Activated B cell treated with CpG ODN at 0.5 μM for 24 hours (primary cell): ENCODE measurements at regions of chrX and their contacts with region 1.

Region 1: DNA sequence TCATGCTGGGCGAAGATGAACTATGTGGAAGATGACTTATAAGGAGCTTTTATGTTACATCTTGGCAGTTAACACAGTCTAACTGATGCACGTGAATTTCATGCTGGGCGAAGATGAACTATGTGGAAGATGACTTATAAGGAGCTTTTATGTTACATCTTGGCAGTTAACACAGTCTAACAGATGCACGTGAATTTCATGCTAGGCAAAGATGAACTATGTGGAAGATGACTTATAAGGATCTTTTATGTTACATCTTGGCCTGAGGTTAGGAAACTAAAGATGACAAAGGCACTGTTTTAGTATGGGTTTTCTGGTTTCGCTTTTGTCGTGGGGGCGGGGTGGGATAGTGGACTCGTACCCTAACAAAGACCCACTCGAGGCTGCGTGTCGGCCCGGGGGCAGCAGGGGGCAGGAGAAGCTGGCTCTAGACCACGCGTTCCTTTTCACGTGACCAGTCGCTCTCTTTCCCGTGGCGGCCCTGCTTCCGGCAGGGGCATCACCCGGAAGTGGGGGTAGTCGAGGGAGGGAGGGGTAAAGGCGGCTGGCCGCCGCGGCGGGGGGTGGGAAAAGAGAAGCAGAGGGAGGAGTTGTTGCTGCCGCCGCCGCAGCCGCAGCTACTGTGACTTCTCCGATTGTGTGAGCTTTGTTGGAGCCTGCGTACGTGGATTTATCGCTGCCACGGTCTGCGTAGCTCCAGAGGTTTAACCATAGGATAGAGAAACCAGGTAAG is at the start of gene ATP7A:
- DNase-seq: peak; percentile 72
- ATAC-seq: peak; percentile 92
- H3K4me3 Mint-ChIP-seq: peak within 1 kb of the TSS; percentile 96
- H3K27ac Mint-ChIP-seq: peak within 1 kb of the TSS; percentile 93
- H3K4me1 Mint-ChIP-seq: peaks cover 21% of the 10 kb centered on the region
- H3K27me3 Mint-ChIP-seq: no peaks in the 10 kb centered on the region
- CTCF ChIP-seq: no peak
- total RNA-seq, gene ATP7A: 8.2 and 9.4 TPM in 2 replicates

Region 2: GRCh38 chrX:76279000-76279399 is 1631.3 kb before region 1 on chrX:
- CTCF ChIA-PET with region 1: no interaction called
- POLR2A ChIA-PET with region 1: no interaction called
- intact Hi-C with region 1: loop called (anchors 5 kb)
- DNase-seq: no peak
- ATAC-seq: no peak
- H3K4me3 Mint-ChIP-seq: no peak overlapping the region
- H3K27ac Mint-ChIP-seq: no peak overlapping the region
- H3K4me1 Mint-ChIP-seq: no peaks in the 10 kb centered on the region
- H3K27me3 Mint-ChIP-seq: no peaks in the 10 kb centered on the region
- CTCF ChIP-seq: no peak

Region 3: DNA sequence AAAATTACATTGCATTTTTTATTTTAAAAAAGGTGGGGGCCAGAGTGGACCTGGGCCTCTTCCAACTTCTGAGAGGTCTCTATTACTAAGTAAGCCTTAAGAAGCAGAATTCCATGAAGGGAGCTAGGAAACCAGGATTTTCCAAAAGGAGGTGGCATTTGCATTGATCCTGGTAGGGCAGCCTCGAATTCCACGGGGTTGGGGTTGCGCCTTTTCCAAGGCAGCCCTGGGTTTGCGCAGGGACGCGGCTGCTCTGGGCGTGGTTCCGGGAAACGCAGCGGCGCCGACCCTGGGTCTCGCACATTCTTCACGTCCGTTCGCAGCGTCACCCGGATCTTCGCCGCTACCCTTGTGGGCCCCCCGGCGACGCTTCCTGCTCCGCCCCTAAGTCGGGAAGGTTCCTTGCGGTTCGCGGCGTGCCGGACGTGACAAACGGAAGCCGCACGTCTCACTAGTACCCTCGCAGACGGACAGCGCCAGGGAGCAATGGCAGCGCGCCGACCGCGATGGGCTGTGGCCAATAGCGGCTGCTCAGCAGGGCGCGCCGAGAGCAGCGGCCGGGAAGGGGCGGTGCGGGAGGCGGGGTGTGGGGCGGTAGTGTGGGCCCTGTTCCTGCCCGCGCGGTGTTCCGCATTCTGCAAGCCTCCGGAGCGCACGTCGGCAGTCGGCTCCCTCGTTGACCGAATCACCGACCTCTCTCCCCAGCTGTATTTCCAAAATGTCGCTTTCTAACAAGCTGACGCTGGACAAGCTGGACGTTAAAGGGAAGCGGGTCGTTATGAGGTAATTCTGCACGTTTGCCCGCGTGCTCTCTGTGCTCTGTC is 193.6 kb after region 1 on chrX and contains the start of gene PGK1:
- CTCF ChIA-PET with region 1: no interaction called
- POLR2A ChIA-PET with region 1: interaction called, 4 read pairs
- intact Hi-C with region 1: loop called (anchors 1 kb)
- DNase-seq: peak; percentile 81
- ATAC-seq: peak; percentile 95
- H3K4me3 Mint-ChIP-seq: peak within 1 kb of the TSS; percentile 87
- H3K27ac Mint-ChIP-seq: peak within 1 kb of the TSS; percentile 90
- H3K4me1 Mint-ChIP-seq: peaks cover 41% of the 10 kb centered on the region
- H3K27me3 Mint-ChIP-seq: peaks cover 2% of the 10 kb centered on the region
- CTCF ChIP-seq: no peak
- total RNA-seq, gene PGK1: 293 and 295 TPM in 2 replicates

Region 4: DNA sequence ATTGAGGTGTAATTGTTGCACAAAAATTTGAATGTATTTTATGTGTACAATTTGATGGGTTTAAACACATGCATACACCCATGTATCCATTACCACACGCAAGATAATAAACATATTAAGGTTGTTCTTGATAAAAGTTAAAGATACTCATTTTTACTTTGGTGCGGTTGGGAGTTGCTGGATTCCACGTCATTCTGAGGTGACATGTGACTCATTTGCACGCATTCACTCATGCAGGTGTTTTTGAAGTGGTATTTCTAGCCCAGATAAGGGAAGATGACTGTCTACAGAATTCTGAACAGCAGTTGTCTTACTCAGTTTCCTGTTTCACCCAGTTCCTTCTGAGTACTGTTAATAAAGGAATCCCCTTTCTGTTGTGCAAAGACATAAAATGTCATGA is 606.9 kb after region 1 on chrX:
- CTCF ChIA-PET with region 1: no interaction called
- POLR2A ChIA-PET with region 1: no interaction called
- intact Hi-C with region 1: loop called (anchors 10 kb)
- DNase-seq: no peak
- ATAC-seq: peak; percentile 82
- H3K4me3 Mint-ChIP-seq: no peak overlapping the region
- H3K27ac Mint-ChIP-seq: peak overlapping the region; percentile 70
- H3K4me1 Mint-ChIP-seq: peaks cover 28% of the 10 kb centered on the region
- H3K27me3 Mint-ChIP-seq: no peaks in the 10 kb centered on the region
- CTCF ChIP-seq: no peak

Region 5: GRCh38 chrX:78754917-78755316 is 844.6 kb after region 1 on chrX:
- CTCF ChIA-PET with region 1: no interaction called
- POLR2A ChIA-PET with region 1: no interaction called
- intact Hi-C with region 1: loop called (anchors 10 kb)
- DNase-seq: no peak
- ATAC-seq: peak; percentile 85
- H3K4me3 Mint-ChIP-seq: peak overlapping the region; percentile 56
- H3K27ac Mint-ChIP-seq: peak overlapping the region; percentile 73
- H3K4me1 Mint-ChIP-seq: peaks cover 45% of the 10 kb centered on the region
- H3K27me3 Mint-ChIP-seq: no peaks in the 10 kb centered on the region
- CTCF ChIP-seq: no peak